Right ventricle myocardium inferior (tissue), 1 donor: ENCODE measurements at regions of chr5 and their contacts with region 1.

Region 1: GRCh38 chr5:88826646-88827585 is 56.1 kb downstream of the MEF2C start:
- DNase-seq: no peak
- ATAC-seq: peak; percentile 80

Region 2: DNA sequence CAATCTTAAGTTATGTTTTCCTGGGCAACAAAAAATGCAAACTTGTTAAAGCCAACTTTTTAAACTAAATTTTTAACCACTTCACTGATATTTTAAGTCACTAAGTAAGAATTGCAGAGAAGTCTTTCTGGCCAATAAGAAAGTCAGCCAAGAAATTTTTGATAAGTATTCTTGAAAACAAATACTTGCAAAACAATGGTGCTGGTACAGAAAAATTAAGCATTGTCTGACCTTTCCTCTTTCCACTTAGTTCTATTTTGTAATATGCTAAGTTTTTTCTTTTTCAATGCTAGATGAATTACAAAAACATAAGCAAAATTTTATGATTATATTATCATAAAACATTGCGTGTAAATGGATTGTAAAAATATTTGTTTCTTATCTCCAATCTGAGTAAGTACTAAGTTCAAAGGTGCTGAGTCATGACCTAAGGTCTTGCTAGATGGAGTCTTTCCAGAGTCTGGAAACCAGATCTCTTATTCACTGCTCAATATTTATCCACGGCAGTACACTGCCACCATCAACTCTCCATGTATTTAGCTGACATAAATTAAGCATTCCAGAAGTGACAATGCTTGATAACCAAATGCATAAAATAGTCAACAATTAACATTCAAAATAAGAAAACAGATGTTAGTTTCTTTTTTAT is 83.6 kb before region 1 on chr5:
- intact Hi-C with region 1: loop called (anchors 5 kb)
- DNase-seq: no peak
- ATAC-seq: no peak

Region 3: DNA sequence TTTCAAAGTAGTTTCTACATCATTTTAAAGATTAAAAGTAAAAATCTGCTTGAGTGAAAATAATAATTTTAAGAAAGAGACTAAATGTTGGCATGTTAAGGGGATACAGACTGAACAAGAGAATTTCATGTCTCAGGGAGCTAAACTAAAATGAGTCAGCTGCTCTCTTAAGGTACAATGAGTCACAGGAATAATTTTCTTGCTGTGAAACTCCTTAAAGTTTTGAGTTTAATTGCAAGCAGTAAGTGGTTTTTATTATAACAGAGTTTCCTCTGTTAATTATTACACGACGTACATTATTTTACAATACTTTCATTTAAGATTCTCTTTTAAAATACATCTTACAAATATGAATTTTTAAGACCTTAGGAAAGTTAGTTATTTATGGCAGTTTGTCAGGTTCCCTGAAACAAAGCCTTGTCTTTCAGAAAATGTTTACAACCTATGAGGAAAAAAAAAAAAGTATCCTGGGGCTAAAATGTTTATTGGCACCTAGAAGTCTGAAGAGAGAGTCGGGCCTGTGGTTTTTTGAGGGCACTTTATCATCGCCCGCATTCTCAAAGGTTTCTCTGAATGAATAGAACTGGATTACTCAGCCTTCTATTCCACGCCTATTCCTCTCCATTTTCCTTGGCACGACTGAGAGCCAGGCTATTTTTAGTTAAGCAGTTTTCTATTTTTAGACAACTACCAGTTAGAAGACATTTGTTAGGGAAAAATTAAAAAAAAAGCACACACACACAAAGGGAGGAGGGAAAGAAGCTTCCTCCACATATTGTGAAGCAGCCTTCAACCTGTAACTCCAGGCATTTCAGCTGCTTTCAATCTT is 41.3 kb before region 1 on chr5:
- intact Hi-C with region 1: loop called (anchors 5 kb)
- DNase-seq: no peak
- ATAC-seq: peak; percentile 91

Region 4: GRCh38 chr5:88883059-88883835 is 56.3 kb after region 1 on chr5 and contains the start of gene MEF2C:
- intact Hi-C with region 1: loop called (anchors 2 kb)
- DNase-seq: peak; percentile 86
- ATAC-seq: peak; percentile 85
- total RNA-seq, gene MEF2C: 46.7 TPM

Region 5: GRCh38 chr5:88940713-88941112 is 113.8 kb after region 1 on chr5:
- intact Hi-C with region 1: no loop called
- DNase-seq: no peak
- ATAC-seq: no peak